Left lung (tissue), 14 donors: ENCODE measurements at regions of chr22 and their contacts with region 1.

Region 1: GRCh38 chr22:25461301-25461700 is 103.2 kb upstream of the GRK3 start:
- DNase-seq: no peak
- ATAC-seq: no peak
- H3K4me3 ChIP-seq: no peak overlapping the region
- H3K27ac ChIP-seq: no peak overlapping the region
- H3K4me1 ChIP-seq: no peaks in the 10 kb centered on the region
- H3K27me3 ChIP-seq: no peaks in the 10 kb centered on the region
- CTCF ChIP-seq: no peak

Region 2: GRCh38 chr22:25702040-25702439 is 240.7 kb after region 1 on chr22:
- intact Hi-C with region 1: loop called in 1 of 2 experiments (anchors 5 kb)
- DNase-seq: no peak
- ATAC-seq: peak; percentile 63
- H3K4me3 ChIP-seq: no peak overlapping the region
- H3K27ac ChIP-seq: no peak overlapping the region
- H3K4me1 ChIP-seq: no peaks in the 10 kb centered on the region
- H3K27me3 ChIP-seq: no peaks in the 10 kb centered on the region
- CTCF ChIP-seq: peak in 1 of 2 donors; percentile 31

Region 3: DNA sequence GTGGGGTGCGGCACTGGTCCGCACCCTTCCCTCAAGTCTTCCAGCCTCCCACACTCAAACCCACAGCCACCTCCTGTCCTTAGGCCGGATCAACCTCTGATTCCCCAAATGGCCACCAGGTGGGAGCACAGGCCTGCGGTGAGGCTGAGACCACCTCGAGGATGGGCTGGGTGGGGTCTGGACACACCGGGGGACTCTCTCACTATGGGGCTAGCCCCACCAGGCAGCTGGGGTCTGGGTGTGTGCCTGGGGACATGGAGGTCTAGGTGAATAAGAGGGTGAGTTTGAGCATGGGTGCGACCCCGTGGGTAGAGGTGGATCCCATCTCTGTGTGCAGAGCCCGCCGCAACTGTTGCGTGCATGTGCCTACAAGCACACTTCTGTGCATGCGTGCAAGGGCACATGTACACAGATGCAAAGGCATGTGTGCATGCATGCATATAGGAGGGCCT is 313.3 kb after region 1 on chr22:
- intact Hi-C with region 1: loop called in 1 of 2 experiments (anchors 5 kb)
- DNase-seq: no peak
- ATAC-seq: peak; percentile 17
- H3K4me3 ChIP-seq: no peak overlapping the region
- H3K27ac ChIP-seq: no peak overlapping the region
- H3K4me1 ChIP-seq: no peaks in the 10 kb centered on the region
- H3K27me3 ChIP-seq: peaks cover 0 to 10% of the 10 kb centered on the region in 2 donors
- CTCF ChIP-seq: no peak